ENCODE measurements at regions of chr4 and their contacts with region 1.

Region 1: DNA sequence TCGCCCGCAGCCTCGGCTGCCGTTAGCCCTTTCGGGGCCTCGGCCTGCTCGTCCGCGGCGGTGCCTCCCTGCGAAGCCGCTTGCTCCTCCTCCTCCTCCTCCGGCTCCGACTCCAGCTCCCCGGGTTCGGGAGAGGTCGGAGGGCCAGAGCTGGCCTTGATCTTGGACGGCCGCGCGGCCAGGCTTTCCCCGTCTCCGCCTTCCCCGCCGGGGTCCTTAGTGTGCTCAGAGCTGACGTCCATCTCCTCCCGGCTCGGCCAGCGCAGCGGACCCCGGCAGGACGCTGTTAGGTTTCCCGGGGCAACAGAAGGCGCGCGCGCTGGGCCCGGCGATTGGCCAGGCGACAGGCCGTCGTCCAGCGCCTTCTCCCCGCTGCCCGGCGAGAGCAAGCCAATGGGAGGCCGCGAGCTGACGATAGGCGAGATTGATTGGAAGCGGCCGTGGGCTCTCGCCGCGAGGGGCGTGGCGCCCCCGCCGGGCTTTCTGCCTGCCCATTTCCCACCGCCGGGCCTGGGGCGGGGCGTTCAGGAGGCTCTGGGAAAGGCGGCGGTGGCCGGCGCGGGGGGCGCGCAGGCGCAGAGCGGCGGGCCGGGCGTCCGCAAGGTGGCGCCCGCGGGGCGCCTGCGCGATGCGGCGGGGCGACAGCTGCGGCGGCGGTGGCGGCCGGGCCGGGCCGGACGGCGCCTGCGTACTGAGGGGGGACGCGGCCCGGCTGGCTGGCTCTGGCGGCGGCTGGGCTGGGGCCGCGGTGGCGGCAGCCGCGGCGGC is at the start of gene TADA2B:
- DNase-seq: peak; percentile 93
- H3K4me3 Mint-ChIP-seq: peak within 1 kb of the TSS; percentile 95
- H3K27ac Mint-ChIP-seq: peak within 1 kb of the TSS; percentile 86
- H3K4me1 Mint-ChIP-seq: peaks cover 48% of the 10 kb centered on the region
- H3K27me3 Mint-ChIP-seq: peaks cover 8% of the 10 kb centered on the region
- total RNA-seq, gene TADA2B: 15.2 and 16.8 TPM in 2 replicates

Region 2: DNA sequence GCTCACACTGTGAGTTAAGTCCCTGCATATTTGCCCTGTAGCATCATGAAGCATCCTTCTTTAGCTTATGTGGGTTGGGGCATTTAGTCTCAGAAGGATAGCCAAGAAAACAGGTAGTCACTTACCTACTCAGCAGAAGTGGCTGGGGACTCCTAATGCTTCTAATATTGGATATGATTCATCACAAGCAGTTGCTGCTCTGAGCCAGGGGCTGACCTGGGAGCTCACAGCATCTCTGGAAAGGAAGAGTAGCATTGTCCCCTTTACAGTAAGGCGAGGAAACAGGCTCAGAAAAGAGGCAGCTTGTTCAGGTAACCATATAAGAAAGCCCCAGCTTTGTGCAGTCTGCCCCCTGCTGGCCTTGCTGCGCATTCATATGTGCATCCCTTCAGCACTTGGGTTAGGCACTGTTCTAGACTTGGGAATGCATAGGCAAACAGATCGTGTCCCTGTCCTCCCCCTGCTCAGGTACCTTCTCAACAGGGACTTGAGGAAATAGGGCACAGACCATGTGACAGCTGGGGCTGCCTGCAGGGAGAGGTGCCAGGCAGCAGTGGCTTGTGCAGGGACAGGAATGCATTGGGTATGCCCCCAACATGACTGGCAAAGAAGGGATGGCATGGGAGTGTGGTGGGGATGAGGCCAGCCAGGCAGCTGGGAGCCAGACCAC is 169.0 kb before region 1 on chr4:
- intact Hi-C with region 1: no loop called
- DNase-seq: peak; percentile 64
- H3K4me3 Mint-ChIP-seq: no peak overlapping the region
- H3K27ac Mint-ChIP-seq: no peak overlapping the region
- H3K4me1 Mint-ChIP-seq: peaks cover 16% of the 10 kb centered on the region
- H3K27me3 Mint-ChIP-seq: no peaks in the 10 kb centered on the region

Region 3: DNA sequence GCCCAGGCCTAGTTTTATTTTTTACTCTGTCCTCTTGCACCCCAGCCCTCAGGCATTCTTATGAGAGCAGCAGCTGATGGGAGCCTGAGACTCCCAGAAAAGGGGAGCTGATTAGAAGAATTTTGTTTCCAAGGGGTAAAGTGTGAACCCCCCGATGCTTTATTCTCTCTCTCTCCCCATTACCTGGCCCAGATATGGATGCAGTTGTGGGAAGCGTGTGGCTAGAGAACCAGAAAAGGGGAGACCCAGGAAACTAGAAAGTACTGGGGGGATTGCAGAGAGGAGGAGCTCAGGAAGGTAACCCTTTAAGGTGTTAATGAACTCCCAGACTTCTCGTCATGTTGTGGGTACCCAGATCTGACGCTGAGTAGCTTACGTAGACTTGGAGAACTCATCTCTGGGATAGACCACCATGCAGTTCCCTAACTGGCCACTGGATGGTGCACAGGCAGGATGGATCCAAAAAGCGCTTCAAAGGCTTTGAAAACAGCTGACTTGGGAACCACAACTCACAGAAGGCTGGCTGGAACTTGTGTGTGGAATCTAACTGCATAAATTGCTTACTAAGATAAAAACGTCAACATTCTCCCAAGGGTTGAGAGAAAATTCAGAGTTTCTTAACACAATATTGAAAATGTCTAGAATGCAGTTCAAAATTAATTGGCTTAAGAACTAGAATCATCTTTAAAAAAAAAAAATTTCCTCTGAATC is 68.6 kb before region 1 on chr4:
- intact Hi-C with region 1: loop called (anchors 1 kb)
- DNase-seq: peak; percentile 70
- H3K4me3 Mint-ChIP-seq: no peak overlapping the region
- H3K27ac Mint-ChIP-seq: no peak overlapping the region
- H3K4me1 Mint-ChIP-seq: peaks cover 13% of the 10 kb centered on the region
- H3K27me3 Mint-ChIP-seq: no peaks in the 10 kb centered on the region